ENCODE measurements at regions of chr11 and their contacts with region 1.

Region 1: DNA sequence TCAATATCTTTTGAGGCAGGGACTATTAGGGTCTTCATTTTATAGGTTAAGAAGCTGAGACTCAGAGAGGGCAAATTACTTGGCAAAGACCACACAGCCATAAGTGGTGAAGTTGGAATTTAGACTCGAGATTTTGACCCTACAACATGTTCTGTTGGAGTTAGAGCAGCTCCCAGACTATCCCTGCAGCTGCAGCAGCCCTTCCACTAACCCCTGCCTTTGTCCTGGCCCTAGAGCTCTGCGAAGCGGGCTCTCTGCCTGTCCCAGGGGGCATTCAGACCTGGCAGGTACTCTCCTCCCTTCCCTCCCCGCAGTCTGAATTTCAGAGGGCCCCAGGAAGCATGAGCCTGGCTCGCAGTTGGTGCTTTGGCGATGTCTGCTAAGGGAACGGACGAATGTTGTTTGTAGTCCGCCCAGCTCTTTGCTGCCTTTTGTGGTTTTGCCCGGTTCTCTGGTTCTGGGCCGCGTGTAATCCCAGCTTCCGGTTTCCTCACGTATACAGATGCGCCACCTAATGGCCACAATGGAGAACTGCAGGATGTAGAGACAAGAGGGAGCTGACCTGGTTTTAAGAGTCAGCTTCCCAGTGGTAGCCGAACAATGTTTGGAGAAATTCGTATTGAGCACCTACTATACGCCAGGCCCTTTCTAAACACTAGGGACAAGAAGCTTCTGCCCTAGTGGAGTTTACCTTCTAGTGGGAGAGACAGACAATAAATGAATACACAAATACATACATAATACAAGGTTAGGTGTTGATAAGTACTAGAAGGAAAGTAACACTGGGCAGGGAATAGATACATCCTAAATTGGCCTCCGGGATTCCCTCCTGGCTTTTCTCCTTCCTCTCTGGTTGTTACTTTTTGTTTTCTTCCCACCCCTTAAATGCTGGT is 125.2 kb downstream of the ST3GAL4 start:
- DNase-seq: no peak
- H3K4me3 ChIP-seq: no peak overlapping the region
- H3K27me3 ChIP-seq: no peaks in the 10 kb centered on the region
- CTCF ChIP-seq: peak; percentile 93

Region 2: DNA sequence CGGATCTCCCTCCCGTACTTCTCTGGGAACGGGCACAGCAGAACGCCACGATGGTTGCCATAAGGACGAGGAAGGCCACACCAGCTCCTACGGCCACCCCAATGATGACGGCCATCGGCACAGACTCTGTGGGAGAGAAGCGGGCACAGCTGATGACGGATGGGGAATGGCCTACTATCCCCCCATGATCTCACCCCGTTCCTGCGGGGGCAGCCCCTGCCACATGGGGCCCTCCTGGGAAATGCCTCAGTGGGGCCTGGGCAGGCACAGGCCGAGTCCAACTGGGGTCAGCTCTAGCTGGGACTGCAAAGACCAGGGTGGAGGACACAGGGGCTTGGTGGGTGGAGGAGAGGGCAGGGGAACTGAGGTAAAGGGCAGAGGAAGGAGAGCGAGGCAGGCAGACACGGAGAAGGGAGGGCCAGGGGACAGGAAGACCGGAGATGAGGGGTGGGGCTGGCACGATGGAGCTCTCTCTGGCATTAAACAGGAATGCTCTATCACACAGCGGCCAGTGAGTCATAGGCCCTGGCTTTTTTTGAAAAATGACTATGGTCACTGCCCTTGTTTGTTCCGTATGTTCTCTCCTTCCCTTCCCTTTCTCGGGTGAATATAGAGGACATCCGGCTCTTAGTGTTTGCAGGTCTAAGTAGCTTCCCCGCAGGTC is 49.1 kb before region 1 on chr11:
- CTCF ChIA-PET with region 1: interaction called, 20 read pairs
- POLR2A ChIA-PET with region 1: no interaction called
- DNase-seq: peak; percentile 35
- H3K4me3 ChIP-seq: no peak overlapping the region
- H3K27me3 ChIP-seq: no peaks in the 10 kb centered on the region
- CTCF ChIP-seq: no peak

Region 3: DNA sequence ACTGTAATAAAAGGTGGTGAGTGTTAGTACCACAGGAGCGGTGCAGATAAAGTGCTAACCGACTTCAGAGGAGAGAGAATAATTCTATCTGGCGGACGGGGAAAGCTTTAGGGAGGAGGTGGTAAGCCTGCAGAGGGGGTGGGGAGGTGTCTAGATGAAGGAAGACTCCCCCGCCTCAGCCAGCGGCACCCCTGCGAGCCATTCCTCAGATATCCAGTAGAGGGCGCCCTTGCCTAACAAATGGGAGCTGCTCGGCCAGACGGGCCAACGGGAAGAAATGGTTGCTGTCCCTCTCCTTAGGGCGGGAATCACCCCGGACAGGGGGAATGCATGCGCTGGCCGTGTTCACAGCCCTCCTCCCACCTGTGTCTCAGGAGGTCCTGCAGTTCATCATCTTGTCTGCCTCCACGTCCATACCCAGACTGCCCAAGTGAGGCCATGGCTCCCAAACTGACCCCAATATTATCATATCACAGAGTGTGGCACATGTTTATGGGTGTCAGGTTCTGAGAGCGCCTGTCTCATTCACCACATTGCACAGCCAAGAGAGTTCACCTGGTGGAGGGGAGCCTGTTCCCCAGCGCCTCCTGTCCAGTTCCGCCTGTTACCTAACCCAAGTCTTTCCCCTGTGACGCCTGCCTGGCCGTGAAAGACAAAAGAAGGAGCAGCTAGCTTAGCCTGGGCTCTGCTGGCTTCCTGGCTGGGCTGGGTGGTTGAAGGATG is 39.7 kb before region 1 on chr11:
- CTCF ChIA-PET with region 1: interaction called, 57 read pairs
- POLR2A ChIA-PET with region 1: no interaction called
- DNase-seq: no peak
- H3K4me3 ChIP-seq: no peak overlapping the region
- H3K27me3 ChIP-seq: no peaks in the 10 kb centered on the region
- CTCF ChIP-seq: peak; percentile 90

Region 4: GRCh38 chr11:126459691-126460281 is 20.9 kb before region 1 on chr11:
- CTCF ChIA-PET with region 1: interaction called, 100 read pairs
- POLR2A ChIA-PET with region 1: no interaction called
- DNase-seq: peak; percentile 63
- H3K4me3 ChIP-seq: no peak overlapping the region
- H3K27me3 ChIP-seq: no peaks in the 10 kb centered on the region
- CTCF ChIP-seq: no peak

Region 5: DNA sequence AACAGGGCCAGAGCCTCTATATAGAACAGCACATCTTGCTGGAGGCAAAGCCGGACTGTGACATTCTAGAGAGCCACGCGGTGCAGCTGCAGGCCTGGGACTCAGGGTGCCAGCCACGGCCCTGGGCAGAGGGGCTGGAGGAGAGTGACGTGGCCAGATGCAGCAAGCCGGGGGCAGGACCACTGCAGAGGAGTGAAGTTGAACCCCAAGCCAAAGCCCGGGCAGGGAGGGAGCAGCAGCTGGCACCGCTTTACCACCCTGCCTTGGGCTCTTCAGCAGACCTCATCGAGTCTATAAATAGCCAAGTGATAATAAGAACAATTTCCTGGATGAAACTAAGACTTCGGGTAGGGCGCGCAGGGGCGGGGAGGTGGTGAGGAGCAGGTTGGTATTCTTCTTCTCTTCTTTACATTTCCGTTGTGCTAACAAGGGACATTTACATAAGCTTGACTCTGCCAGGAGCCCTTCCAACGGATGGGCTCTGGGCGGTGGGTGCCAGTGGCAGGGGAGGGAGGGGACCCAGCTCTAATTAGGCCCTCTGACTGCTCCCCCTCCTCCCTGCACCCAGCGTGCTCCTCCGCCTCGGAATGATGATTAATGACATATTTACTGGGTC is 15.0 kb before region 1 on chr11:
- CTCF ChIA-PET with region 1: interaction called, 100 read pairs
- POLR2A ChIA-PET with region 1: no interaction called
- DNase-seq: no peak
- H3K4me3 ChIP-seq: no peak overlapping the region
- H3K27me3 ChIP-seq: no peaks in the 10 kb centered on the region
- CTCF ChIP-seq: no peak

Region 6: GRCh38 chr11:126502159-126502558 is 21.5 kb after region 1 on chr11:
- CTCF ChIA-PET with region 1: interaction called, 10 read pairs
- POLR2A ChIA-PET with region 1: no interaction called
- DNase-seq: no peak
- H3K4me3 ChIP-seq: no peak overlapping the region
- H3K27me3 ChIP-seq: no peaks in the 10 kb centered on the region
- CTCF ChIP-seq: no peak

Region 7: GRCh38 chr11:126695293-126695692 is 214.6 kb after region 1 on chr11:
- CTCF ChIA-PET with region 1: no interaction called
- POLR2A ChIA-PET with region 1: no interaction called
- DNase-seq: no peak
- H3K4me3 ChIP-seq: no peak overlapping the region
- H3K27me3 ChIP-seq: no peaks in the 10 kb centered on the region
- CTCF ChIP-seq: no peak